Transverse colon (tissue), 4 donors: ENCODE measurements at regions of chr4 and their contacts with region 1.

Region 1: GRCh38 chr4:153483432-153484418 is 17.6 kb downstream of the TMEM131L start:
- DNase-seq: no peak
- H3K4me3 ChIP-seq: no peak overlapping the region
- H3K27ac ChIP-seq: peak overlapping the region; percentile 9 to 48 (median 36)
- H3K4me1 ChIP-seq: peaks cover 5 to 39% (median 25%) of the 10 kb centered on the region in 4 donors
- H3K27me3 ChIP-seq: no peaks in the 10 kb centered on the region
- CTCF ChIP-seq: no peak
- EP300 ChIP-seq: no peak
- POLR2A ChIP-seq: no peak

Region 2: GRCh38 chr4:153466949-153467896 is 16.5 kb before region 1 on chr4:
- in situ Hi-C with region 1: no loop called
- intact Hi-C with region 1: loop called (anchors 1 kb)
- DNase-seq: peak; percentile 86
- H3K4me3 ChIP-seq: peak overlapping the region; percentile 81 to 93 (median 88)
- H3K27ac ChIP-seq: peak overlapping the region; percentile 86 to 93 (median 90)
- H3K4me1 ChIP-seq: peaks cover 12 to 56% (median 44%) of the 10 kb centered on the region in 4 donors
- H3K27me3 ChIP-seq: no peaks in the 10 kb centered on the region
- CTCF ChIP-seq: no peak
- EP300 ChIP-seq: no peak
- POLR2A ChIP-seq: peak; percentile 41

Region 3: DNA sequence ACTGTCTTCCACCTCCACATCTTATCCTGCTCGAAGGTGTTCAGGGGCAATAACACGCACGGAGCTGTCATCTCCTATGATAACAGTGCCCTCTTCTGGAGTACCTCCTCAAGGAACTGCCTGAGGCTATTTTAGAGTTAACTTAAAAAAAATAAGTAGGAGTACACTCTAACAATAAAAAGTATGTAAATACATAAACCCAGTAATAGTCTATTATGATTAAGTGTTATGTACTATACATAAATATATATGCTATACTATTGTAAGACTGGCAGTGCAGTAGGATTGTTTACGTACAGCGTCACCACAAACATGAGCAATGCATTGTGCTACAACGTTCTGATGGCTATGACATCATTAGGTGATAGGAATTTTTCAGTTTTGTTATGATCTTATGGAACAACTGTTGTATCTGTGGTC is 165.9 kb after region 1 on chr4:
- in situ Hi-C with region 1: no loop called
- intact Hi-C with region 1: no loop called
- DNase-seq: no peak
- H3K4me3 ChIP-seq: no peak overlapping the region
- H3K27ac ChIP-seq: no peak overlapping the region
- H3K4me1 ChIP-seq: no peaks in the 10 kb centered on the region
- H3K27me3 ChIP-seq: no peaks in the 10 kb centered on the region
- CTCF ChIP-seq: peak in 3 of 5 experiments; percentile 19 to 26 (median 21)
- EP300 ChIP-seq: no peak
- POLR2A ChIP-seq: no peak

Region 4: DNA sequence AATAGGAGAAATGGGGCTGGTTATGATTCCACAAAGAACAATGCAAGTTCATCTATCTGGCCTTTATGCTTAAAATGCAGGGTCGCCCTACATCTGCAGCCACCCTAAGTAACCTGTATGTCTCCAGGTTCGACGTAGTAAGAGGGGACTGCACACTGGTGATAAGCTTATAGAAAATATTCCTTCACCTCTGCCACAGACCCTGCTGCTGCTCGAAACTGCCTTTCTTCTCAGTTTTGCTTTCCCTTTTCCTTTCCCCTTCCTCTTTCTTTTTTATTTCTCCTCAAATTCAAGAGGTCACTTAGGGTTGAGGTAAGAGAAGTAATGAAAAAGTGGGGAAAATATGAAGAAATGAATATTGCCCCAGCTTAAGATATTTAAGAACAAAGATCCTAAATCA is 884.3 kb after region 1 on chr4:
- in situ Hi-C with region 1: no loop called
- intact Hi-C with region 1: no loop called
- DNase-seq: no peak
- H3K4me3 ChIP-seq: no peak overlapping the region
- H3K27ac ChIP-seq: no peak overlapping the region
- H3K4me1 ChIP-seq: peaks cover 0 to 9% (median 0%) of the 10 kb centered on the region in 4 donors
- H3K27me3 ChIP-seq: no peaks in the 10 kb centered on the region
- CTCF ChIP-seq: no peak
- EP300 ChIP-seq: no peak
- POLR2A ChIP-seq: no peak